Activated CD4-positive, alpha-beta T cell treated with anti-CD3 and anti-CD28 coated beads, Interleukin-2, amount 10 ng/mL, durations not matched to agents 24 days and 14 days (primary cell): ENCODE measurements at regions of chr17 and their contacts with region 1.

Region 1: DNA sequence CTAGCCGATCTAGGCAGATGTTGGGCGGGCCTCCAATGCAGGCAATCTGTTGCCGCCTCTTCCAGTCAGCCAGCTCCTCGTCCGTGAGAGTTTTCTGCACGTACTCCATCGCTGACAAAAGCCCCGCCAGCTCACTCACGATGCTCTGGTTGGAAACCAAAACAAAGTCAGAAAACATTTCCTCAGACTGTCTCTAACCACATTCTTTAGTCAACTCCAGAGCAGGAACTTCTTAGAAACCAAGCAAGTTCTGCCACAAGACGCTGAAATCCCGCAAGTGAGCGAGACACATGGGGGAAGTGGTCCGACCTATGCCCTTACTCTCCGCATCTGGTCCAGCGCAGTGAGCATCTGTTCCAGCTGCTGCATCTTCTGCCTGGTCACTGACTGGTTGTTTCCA is 49.1 kb downstream of the STAT5A start:
- DNase-seq: peak; percentile 95
- H3K4me3 Mint-ChIP-seq: peak overlapping the region; percentile 67
- H3K27ac Mint-ChIP-seq: peak overlapping the region; percentile 93
- H3K4me1 Mint-ChIP-seq: peaks cover 65% of the 10 kb centered on the region
- H3K27me3 Mint-ChIP-seq: no peaks in the 10 kb centered on the region

Region 2: DNA sequence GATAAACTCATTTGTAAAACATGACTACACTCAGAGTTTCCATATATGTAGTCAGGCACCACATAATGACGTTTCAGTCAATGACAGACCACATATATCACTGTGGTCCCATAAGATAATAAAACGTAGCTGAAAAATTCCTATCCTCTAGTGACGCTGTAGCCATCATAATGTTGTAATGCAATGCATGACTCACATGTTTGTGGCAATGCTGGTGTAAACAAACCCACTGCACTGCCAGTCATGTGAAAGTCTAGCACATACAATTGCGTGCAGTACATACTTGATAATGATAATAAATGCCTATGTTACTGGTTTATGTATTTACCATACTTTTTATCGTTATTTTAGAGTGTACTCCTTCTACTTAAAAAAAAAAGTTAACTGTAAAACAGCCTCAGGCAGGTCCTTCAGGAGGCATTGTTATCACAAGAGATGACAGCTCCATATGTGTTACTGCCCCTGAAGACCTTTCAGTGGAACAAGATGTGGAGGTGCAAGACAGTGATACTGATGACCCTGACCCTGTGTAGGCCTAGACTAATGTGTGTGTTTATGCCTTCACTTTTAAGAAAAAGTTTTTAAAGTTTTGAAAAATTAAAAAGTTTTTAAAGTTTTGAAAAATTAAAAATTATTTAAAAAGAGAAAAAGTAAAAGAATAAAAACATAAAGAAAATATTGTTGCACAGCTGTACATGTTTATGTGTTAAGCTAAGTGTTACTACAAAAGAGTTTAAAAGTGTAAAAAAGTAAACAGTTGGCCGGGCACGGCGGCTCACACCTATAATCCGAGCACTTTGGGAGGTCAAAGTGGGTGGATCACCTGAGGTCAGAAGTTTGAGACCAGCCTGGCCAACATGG is 70.3 kb before region 1 on chr17:
- intact Hi-C with region 1: loop called (anchors 1 kb)
- DNase-seq: peak; percentile 85
- H3K4me3 Mint-ChIP-seq: peak overlapping the region; percentile 76
- H3K27ac Mint-ChIP-seq: peak overlapping the region; percentile 98
- H3K4me1 Mint-ChIP-seq: peaks cover 52% of the 10 kb centered on the region
- H3K27me3 Mint-ChIP-seq: no peaks in the 10 kb centered on the region

Region 3: GRCh38 chr17:42322382-42323267 is 14.8 kb before region 1 on chr17:
- intact Hi-C with region 1: loop called (anchors 2 kb)
- DNase-seq: peak; percentile 98
- H3K4me3 Mint-ChIP-seq: peak overlapping the region; percentile 39
- H3K27ac Mint-ChIP-seq: peak overlapping the region; percentile 73
- H3K4me1 Mint-ChIP-seq: peaks cover 41% of the 10 kb centered on the region
- H3K27me3 Mint-ChIP-seq: no peaks in the 10 kb centered on the region

Region 4: DNA sequence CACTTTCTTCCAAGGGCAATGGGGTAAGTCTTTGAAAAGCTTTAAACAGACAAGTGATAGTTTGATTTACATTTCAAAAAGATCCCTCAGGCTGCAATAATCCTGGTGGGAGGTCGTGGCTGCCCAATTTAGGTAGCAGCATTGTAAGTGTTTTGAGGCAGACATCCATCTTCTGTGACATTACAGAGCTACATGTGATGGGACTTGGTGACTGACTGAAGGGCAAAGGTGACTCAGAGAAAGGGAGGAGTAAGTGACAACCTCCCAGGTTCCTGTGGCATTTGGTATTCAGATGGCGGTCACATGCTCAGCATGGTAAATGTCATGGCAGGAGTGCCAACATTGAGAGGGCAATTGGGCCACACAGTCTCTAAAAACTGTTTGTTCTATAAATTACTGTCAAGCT is 24.3 kb after region 1 on chr17:
- intact Hi-C with region 1: loop called (anchors 1 kb)
- DNase-seq: peak; percentile 76
- H3K4me3 Mint-ChIP-seq: peak overlapping the region; percentile 67
- H3K27ac Mint-ChIP-seq: peak overlapping the region; percentile 92
- H3K4me1 Mint-ChIP-seq: peaks cover 68% of the 10 kb centered on the region
- H3K27me3 Mint-ChIP-seq: no peaks in the 10 kb centered on the region

Region 5: DNA sequence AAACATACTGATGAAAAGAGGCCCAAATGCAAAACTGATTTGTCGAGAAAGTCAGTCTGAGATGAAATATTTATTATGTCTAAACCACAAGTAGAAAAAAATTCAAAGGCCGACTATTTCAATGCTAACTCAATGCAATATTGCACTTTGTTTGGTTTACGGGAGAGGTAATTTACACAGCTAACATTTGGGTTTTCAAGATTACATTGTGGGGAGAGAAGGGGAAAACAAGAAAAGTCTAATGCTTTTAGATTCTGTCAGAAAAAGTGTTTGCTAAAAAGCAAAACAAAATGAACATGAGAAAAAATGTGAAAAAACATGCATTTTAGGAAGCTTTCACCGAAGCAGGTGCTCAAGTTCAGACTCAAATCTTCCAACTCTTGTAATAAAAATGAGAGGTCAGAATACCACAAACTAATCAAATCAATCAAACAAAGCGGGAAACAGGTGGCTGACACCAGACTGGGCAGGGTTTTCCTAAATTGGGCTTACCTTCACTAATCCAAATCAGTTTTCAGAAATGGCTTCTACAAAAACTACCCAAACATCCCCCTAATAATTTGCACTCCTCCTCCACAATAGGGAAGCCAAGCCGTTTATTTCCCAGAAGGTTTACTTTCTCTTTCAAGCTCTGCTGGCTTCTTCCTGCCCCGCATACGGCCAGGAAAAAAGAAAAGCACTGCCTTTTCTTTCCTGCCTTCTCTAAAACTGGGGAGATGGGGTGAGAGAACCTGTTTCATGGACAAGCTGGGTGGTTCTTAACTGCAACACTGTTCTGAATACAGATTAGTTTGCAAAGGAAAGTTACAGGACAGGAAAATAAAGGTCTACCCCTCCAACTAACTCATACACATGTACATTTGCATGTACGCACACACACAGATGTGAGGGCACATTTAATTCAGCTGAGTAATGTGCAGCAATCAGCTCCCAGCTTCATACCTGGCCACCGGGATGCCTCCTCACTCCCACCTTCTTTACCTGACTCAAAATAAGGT is 41.5 kb after region 1 on chr17:
- intact Hi-C with region 1: loop called (anchors 1 kb)
- DNase-seq: peak; percentile 68
- H3K4me3 Mint-ChIP-seq: peak overlapping the region; percentile 78
- H3K27ac Mint-ChIP-seq: peak overlapping the region; percentile 85
- H3K4me1 Mint-ChIP-seq: peaks cover 60% of the 10 kb centered on the region
- H3K27me3 Mint-ChIP-seq: no peaks in the 10 kb centered on the region

Region 6: GRCh38 chr17:42388381-42389134 is 51.1 kb after region 1 on chr17 and contains the start of gene STAT3:
- intact Hi-C with region 1: loop called (anchors 1 kb)
- DNase-seq: peak; percentile 100
- H3K4me3 Mint-ChIP-seq: peak within 1 kb of the TSS; percentile 83
- H3K27ac Mint-ChIP-seq: peak within 1 kb of the TSS; percentile 100
- H3K4me1 Mint-ChIP-seq: peaks cover 46% of the 10 kb centered on the region
- H3K27me3 Mint-ChIP-seq: no peaks in the 10 kb centered on the region
- total RNA-seq, gene STAT3: 252 and 258 TPM in 2 replicates

Region 7: GRCh38 chr17:42459256-42459800 is 121.9 kb after region 1 on chr17:
- intact Hi-C with region 1: loop called (anchors 5 kb)
- DNase-seq: peak; percentile 74
- H3K4me3 Mint-ChIP-seq: peak overlapping the region; percentile 89
- H3K27ac Mint-ChIP-seq: peak overlapping the region; percentile 86
- H3K4me1 Mint-ChIP-seq: peaks cover 36% of the 10 kb centered on the region
- H3K27me3 Mint-ChIP-seq: peaks cover 13% of the 10 kb centered on the region